ENCODE measurements at regions of chr6 and their contacts with region 1.

Region 1: DNA sequence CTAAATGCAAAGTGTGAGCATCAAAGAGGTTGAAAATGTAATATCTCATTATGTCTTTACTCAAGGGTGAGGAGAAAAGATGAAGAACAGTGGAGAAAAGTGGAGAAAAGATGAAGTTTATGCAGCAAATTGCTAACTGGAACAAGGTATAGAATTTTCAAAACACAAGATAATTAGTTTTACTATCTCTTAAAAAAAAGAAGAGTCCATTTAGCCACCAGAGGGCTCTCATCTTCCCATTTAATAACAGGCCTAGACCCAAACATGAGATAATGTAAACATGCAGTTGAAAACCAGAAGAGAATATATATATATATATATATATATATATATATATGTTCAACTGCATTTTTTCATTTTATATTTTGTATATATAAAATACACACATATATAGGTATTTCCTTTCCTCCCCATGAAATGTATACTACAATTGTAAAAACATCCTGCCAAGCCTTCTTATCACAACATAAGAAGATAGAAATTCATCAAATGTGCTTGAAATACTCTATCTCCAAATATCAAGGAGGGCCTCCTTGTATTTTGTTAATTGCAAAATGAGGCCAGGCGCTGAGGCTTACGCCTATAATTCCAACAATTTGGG is 78.4 kb downstream of the ADTRP start:
- DNase-seq: no peak
- H3K4me3 Mint-ChIP-seq: no peak overlapping the region
- H3K27ac Mint-ChIP-seq: no peak overlapping the region
- H3K4me1 Mint-ChIP-seq: peaks cover 16% of the 10 kb centered on the region
- H3K27me3 Mint-ChIP-seq: no peaks in the 10 kb centered on the region
- CTCF ChIP-seq: no peak

Region 2: GRCh38 chr6:11645016-11645415 is 55.2 kb before region 1 on chr6:
- CTCF ChIA-PET with region 1: no interaction called
- intact Hi-C with region 1: no loop called
- DNase-seq: no peak
- H3K4me3 Mint-ChIP-seq: no peak overlapping the region
- H3K27ac Mint-ChIP-seq: no peak overlapping the region
- H3K4me1 Mint-ChIP-seq: no peaks in the 10 kb centered on the region
- H3K27me3 Mint-ChIP-seq: no peaks in the 10 kb centered on the region
- CTCF ChIP-seq: no peak

Region 3: GRCh38 chr6:11766589-11767450 is 66.6 kb after region 1 on chr6:
- CTCF ChIA-PET with region 1: no interaction called
- intact Hi-C with region 1: loop called (anchors 10 kb)
- DNase-seq: peak; percentile 38
- H3K4me3 Mint-ChIP-seq: no peak overlapping the region
- H3K27ac Mint-ChIP-seq: peak overlapping the region; percentile 40
- H3K4me1 Mint-ChIP-seq: peaks cover 84% of the 10 kb centered on the region
- H3K27me3 Mint-ChIP-seq: no peaks in the 10 kb centered on the region
- CTCF ChIP-seq: no peak

Region 4: DNA sequence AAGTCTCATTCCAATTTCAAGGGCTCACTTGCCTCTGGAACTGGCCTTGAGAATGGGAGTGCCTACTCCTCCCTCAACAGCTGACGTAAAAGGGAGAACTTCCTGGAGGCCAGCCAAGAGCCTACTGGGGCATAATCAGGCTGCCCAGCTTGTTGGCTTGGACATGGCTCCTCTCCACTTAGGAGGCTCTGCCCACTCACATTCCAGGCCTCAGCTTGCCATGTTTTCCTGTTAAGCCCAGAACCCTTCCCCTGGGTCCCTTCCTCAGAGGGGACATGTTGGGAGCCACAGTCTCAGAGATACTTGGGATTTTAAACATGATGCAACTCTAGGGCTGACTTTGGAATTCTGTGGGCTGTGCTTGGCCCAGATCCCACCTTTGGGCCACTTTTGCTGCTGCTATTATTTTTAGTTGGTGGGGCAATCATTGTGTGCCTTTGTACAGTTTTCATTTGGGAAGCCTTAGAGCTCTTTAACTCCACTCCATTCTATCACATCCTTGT is 109.9 kb after region 1 on chr6:
- CTCF ChIA-PET with region 1: interaction called, 4 read pairs
- intact Hi-C with region 1: loop called (anchors 10 kb)
- DNase-seq: peak; percentile 69
- H3K4me3 Mint-ChIP-seq: no peak overlapping the region
- H3K27ac Mint-ChIP-seq: no peak overlapping the region
- H3K4me1 Mint-ChIP-seq: peaks cover 25% of the 10 kb centered on the region
- H3K27me3 Mint-ChIP-seq: no peaks in the 10 kb centered on the region
- CTCF ChIP-seq: no peak

Region 5: DNA sequence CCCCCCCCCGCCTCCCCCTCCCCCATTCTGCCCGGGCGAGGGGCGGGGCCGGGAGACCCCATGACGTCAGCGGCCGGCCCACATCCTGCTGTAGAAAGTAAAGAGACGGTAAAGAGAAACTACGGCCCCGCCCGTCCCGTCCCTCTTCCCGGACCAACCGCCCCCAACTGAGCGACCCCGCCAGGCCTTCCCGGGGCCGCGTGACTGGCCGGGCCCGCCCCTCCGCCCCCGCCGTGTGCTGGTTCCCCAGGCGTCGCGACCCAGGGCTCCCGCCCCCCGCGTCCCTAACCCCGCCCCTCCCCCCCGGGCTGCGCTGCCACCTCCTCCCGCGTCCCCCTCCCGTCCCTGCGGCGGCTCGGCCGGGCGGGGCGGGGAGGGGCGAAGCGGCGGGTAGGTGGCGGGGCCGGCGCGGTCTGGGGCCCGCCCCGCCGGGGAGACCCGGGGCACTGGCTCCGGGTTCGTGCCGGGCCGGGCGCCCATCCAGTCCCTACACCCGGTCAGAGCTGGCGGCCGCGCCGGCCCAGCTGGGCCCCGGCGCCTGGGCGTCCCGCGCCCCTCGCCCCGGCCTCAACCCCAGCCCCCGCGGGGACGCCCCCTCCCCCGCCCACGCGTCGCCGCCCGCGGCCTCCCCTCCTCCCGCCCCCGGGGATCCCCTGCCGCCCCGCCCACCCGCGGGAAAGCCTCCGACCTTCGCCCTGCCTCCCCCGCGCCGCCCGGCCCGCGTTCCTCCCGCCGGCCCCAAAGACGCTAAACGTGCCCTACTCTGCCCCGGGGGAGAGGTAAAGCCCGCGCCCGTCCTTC is 311.3 kb after region 1 on chr6:
- CTCF ChIA-PET with region 1: interaction called, 4 read pairs
- intact Hi-C with region 1: loop called (anchors 5 kb)
- DNase-seq: peak; percentile 91
- H3K4me3 Mint-ChIP-seq: peak overlapping the region; percentile 93
- H3K27ac Mint-ChIP-seq: peak overlapping the region; percentile 74
- H3K4me1 Mint-ChIP-seq: peaks cover 15% of the 10 kb centered on the region
- H3K27me3 Mint-ChIP-seq: no peaks in the 10 kb centered on the region
- CTCF ChIP-seq: no peak

Region 6: GRCh38 chr6:12785301-12785700 is 1085.1 kb after region 1 on chr6:
- CTCF ChIA-PET with region 1: no interaction called
- intact Hi-C with region 1: no loop called
- DNase-seq: peak; percentile 9
- H3K4me3 Mint-ChIP-seq: no peak overlapping the region
- H3K27ac Mint-ChIP-seq: no peak overlapping the region
- H3K4me1 Mint-ChIP-seq: no peaks in the 10 kb centered on the region
- H3K27me3 Mint-ChIP-seq: peaks cover 42% of the 10 kb centered on the region
- CTCF ChIP-seq: no peak